CD8-positive, alpha-beta T cell (primary cell): ENCODE measurements at regions of chr10 and their contacts with region 1.

Region 1: GRCh38 chr10:114110174-114110972 is 63.6 kb downstream of the CCDC186 start:
- DNase-seq: no peak
- ATAC-seq: no peak
- H3K4me3 ChIP-seq: no peak overlapping the region
- H3K4me3 Mint-ChIP-seq: no peak overlapping the region
- H3K27ac ChIP-seq: no peak overlapping the region
- H3K27ac Mint-ChIP-seq: no peak overlapping the region
- H3K4me1 ChIP-seq: no peaks in the 10 kb centered on the region
- H3K4me1 Mint-ChIP-seq: no peaks in the 10 kb centered on the region
- H3K27me3 ChIP-seq: peaks cover 0 to 2% of the 10 kb centered on the region in 2 experiments
- H3K27me3 Mint-ChIP-seq: peaks cover 5% of the 10 kb centered on the region
- CTCF ChIP-seq: no peak

Region 2: GRCh38 chr10:113907166-113907565 is 203.2 kb before region 1 on chr10:
- CTCF ChIA-PET with region 1: no interaction called
- POLR2A ChIA-PET with region 1: no interaction called
- intact Hi-C with region 1: loop called in 1 of 2 experiments (anchors 10 kb)
- DNase-seq: no peak
- ATAC-seq: no peak
- H3K4me3 ChIP-seq: no peak overlapping the region
- H3K4me3 Mint-ChIP-seq: no peak overlapping the region
- H3K27ac ChIP-seq: no peak overlapping the region
- H3K27ac Mint-ChIP-seq: no peak overlapping the region
- H3K4me1 ChIP-seq: no peaks in the 10 kb centered on the region
- H3K4me1 Mint-ChIP-seq: no peaks in the 10 kb centered on the region
- H3K27me3 ChIP-seq: no peaks in the 10 kb centered on the region
- H3K27me3 Mint-ChIP-seq: no peaks in the 10 kb centered on the region
- CTCF ChIP-seq: no peak

Region 3: GRCh38 chr10:114079421-114079820 is 31.0 kb before region 1 on chr10:
- CTCF ChIA-PET with region 1: no interaction called
- POLR2A ChIA-PET with region 1: no interaction called
- intact Hi-C with region 1: no loop called
- DNase-seq: no peak
- ATAC-seq: no peak
- H3K4me3 ChIP-seq: no peak overlapping the region
- H3K4me3 Mint-ChIP-seq: no peak overlapping the region
- H3K27ac ChIP-seq: no peak overlapping the region
- H3K27ac Mint-ChIP-seq: no peak overlapping the region
- H3K4me1 ChIP-seq: no peaks in the 10 kb centered on the region
- H3K4me1 Mint-ChIP-seq: peaks cover 2% of the 10 kb centered on the region
- H3K27me3 ChIP-seq: no peaks in the 10 kb centered on the region
- H3K27me3 Mint-ChIP-seq: no peaks in the 10 kb centered on the region
- CTCF ChIP-seq: no peak

Region 4: GRCh38 chr10:114142018-114142417 is 31.6 kb after region 1 on chr10:
- CTCF ChIA-PET with region 1: no interaction called
- POLR2A ChIA-PET with region 1: no interaction called
- intact Hi-C with region 1: no loop called
- DNase-seq: no peak
- ATAC-seq: no peak
- H3K4me3 ChIP-seq: no peak overlapping the region
- H3K4me3 Mint-ChIP-seq: no peak overlapping the region
- H3K27ac ChIP-seq: no peak overlapping the region
- H3K27ac Mint-ChIP-seq: no peak overlapping the region
- H3K4me1 ChIP-seq: no peaks in the 10 kb centered on the region
- H3K4me1 Mint-ChIP-seq: no peaks in the 10 kb centered on the region
- H3K27me3 ChIP-seq: no peaks in the 10 kb centered on the region
- H3K27me3 Mint-ChIP-seq: no peaks in the 10 kb centered on the region
- CTCF ChIP-seq: no peak